PC-9 (cell line): ENCODE measurements at regions of chr12 and their contacts with region 1.

Region 1: GRCh38 chr12:121822393-121823100 is 18.7 kb downstream of the SETD1B start:
- DNase-seq: no peak
- H3K4me3 ChIP-seq: no peak overlapping the region
- H3K27ac ChIP-seq: no peak overlapping the region
- H3K4me1 ChIP-seq: no peaks in the 10 kb centered on the region
- H3K27me3 ChIP-seq: no peaks in the 10 kb centered on the region
- CTCF ChIP-seq: no peak

Region 2: DNA sequence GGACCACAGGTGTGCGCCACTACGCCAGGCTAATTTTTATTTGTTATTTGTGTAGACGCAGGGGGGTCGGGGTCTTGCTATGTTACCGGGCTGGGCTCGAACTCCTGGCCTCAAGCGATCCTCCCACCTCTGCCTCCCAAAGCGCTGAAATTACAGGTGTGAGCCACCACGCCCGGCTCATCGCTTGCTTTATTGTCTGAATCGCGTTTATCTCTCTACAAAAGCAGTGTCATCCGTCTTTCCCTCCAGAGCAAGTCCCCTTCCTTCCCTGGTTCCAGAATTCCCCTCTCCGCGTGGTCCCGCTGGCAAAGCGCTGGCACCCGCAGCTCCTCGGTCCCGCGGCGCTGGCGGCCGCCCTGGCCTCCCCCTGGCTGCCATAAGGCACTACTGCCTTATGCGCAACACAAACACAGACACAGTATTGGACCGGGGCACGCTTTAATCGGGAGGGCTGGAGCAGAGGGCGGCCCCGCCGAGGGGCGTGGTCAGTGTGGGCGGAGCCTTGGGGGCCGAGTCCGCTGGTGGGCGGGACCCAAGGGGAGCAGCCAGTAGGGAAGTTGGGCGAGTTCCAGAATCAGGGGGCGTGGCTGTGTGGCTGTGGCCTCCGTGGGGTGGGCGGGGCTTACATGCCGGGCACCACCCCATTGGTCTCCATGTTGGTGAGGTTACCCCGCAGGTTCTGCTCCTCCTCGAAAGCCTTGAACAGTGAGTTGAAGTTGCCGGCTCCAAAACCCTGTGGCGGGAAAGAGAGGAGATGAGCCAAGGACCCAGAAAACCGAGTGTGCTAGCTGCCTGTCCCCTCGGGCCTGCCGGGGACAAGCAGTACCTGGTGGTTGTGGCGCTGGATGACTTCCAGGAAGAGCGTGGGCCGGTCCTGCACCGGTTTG is 16.8 kb after region 1 on chr12:
- CTCF ChIA-PET with region 1: no interaction called
- POLR2A ChIA-PET with region 1: interaction called, 17 read pairs
- intact Hi-C with region 1: no loop called
- DNase-seq: peak; percentile 91 to 100
- H3K4me3 ChIP-seq: peak overlapping the region; percentile 60
- H3K27ac ChIP-seq: no peak overlapping the region
- H3K4me1 ChIP-seq: no peaks in the 10 kb centered on the region; the same call in 1 of the 2 replicates
- H3K27me3 ChIP-seq: no peaks in the 10 kb centered on the region
- CTCF ChIP-seq: no peak; the same call in 1 of the 2 replicates

Region 3: DNA sequence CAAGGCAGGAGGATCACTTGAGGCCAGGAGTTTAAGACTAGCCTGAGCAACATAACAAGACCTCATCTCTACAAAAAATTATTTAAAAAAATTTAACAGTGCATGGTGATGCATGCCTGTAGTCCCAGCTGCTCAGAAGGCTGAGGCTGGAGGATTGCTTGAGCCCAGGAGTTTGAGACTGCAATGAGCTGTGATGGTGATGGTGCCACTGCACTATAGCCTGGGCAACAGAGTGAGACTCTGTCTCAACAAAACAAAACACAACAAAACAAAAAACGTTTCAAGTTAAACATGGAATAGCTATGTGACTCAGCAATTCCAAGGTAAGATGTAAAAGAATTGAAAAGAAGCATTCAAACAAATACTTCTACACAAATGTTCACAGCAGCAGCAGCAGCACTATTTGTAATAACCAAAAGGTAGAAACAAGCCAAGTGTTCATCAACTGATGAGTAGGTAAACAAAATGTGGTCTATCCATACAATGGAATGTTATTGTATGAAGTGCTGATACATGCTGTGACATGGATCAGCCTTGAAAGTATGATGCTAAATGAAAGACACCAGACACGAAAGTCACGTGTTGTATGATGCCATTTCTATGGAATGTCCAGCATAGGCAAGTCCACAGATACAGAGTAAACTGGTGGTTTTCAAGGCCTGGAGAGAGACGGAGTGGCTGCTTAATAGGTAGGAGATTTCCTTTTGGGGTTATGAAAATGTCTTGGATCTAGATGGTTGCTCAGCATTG is 127.3 kb after region 1 on chr12:
- CTCF ChIA-PET with region 1: no interaction called
- POLR2A ChIA-PET with region 1: no interaction called
- intact Hi-C with region 1: no loop called
- DNase-seq: no peak
- H3K4me3 ChIP-seq: no peak overlapping the region
- H3K27ac ChIP-seq: no peak overlapping the region
- H3K4me1 ChIP-seq: no peaks in the 10 kb centered on the region
- H3K27me3 ChIP-seq: no peaks in the 10 kb centered on the region
- CTCF ChIP-seq: no peak

Region 4: GRCh38 chr12:122097927-122098756 is 275.6 kb after region 1 on chr12:
- CTCF ChIA-PET with region 1: no interaction called
- POLR2A ChIA-PET with region 1: no interaction called
- intact Hi-C with region 1: no loop called
- DNase-seq: peak; percentile 77 to 89
- H3K4me3 ChIP-seq: no peak overlapping the region
- H3K27ac ChIP-seq: peak overlapping the region; percentile 57
- H3K4me1 ChIP-seq: peaks cover 38% of the 10 kb centered on the region
- H3K27me3 ChIP-seq: no peaks in the 10 kb centered on the region
- CTCF ChIP-seq: no peak

Region 5: GRCh38 chr12:123723765-123724164 is 1901.2 kb after region 1 on chr12:
- CTCF ChIA-PET with region 1: no interaction called
- POLR2A ChIA-PET with region 1: no interaction called
- intact Hi-C with region 1: no loop called
- DNase-seq: no peak
- H3K4me3 ChIP-seq: no peak overlapping the region
- H3K27ac ChIP-seq: no peak overlapping the region
- H3K4me1 ChIP-seq: no peaks in the 10 kb centered on the region
- H3K27me3 ChIP-seq: no peaks in the 10 kb centered on the region
- CTCF ChIP-seq: no peak